Gastrocnemius medialis (tissue), 4 donors: ENCODE measurements at regions of chr16 and their contacts with region 1.

Region 1: GRCh38 chr16:10964039-10964890 is 19.9 kb downstream of the CLEC16A start:
- DNase-seq: peak; percentile 70 to 76
- ATAC-seq: peak; percentile 63 to 90
- H3K4me3 ChIP-seq: no peak overlapping the region
- H3K27ac ChIP-seq: peak overlapping the region; percentile 57 to 75 (median 69)
- H3K4me1 ChIP-seq: peaks cover 15 to 24% of the 10 kb centered on the region in 2 donors
- H3K27me3 ChIP-seq: no peaks in the 10 kb centered on the region
- CTCF ChIP-seq: peak; percentile 90 to 97 (median 94)
- POLR2A ChIP-seq: no peak

Region 2: GRCh38 chr16:11145173-11145818 is 181.0 kb after region 1 on chr16:
- in situ Hi-C with region 1: no loop called
- intact Hi-C with region 1: loop called (anchors 5 kb)
- DNase-seq: peak; percentile 73 to 91
- ATAC-seq: peak; percentile 85 to 94
- H3K4me3 ChIP-seq: no peak overlapping the region
- H3K27ac ChIP-seq: peak overlapping the region; percentile 54 to 73 (median 68)
- H3K4me1 ChIP-seq: peaks cover 31 to 40% of the 10 kb centered on the region in 2 donors
- H3K27me3 ChIP-seq: no peaks in the 10 kb centered on the region
- CTCF ChIP-seq: peak in 1 of 5 experiments; percentile 34
- POLR2A ChIP-seq: peak; percentile 50 to 58

Region 3: GRCh38 chr16:11263737-11264136 is 299.5 kb after region 1 on chr16:
- in situ Hi-C with region 1: loop called in 3 of 4 experiments (anchors 5 kb)
- intact Hi-C with region 1: no loop called
- DNase-seq: no peak
- ATAC-seq: no peak
- H3K4me3 ChIP-seq: no peak overlapping the region
- H3K27ac ChIP-seq: no peak overlapping the region
- H3K4me1 ChIP-seq: peaks cover 0 to 5% of the 10 kb centered on the region in 2 donors
- H3K27me3 ChIP-seq: no peaks in the 10 kb centered on the region
- CTCF ChIP-seq: no peak
- POLR2A ChIP-seq: no peak

Region 4: GRCh38 chr16:11356573-11357331 is 392.5 kb after region 1 on chr16:
- in situ Hi-C with region 1: loop called (anchors 10 to 25 kb)
- intact Hi-C with region 1: loop called (anchors 2 kb)
- DNase-seq: peak; percentile 20 to 44
- ATAC-seq: peak in 1 of 2 donors; percentile 14
- H3K4me3 ChIP-seq: no peak overlapping the region
- H3K27ac ChIP-seq: no peak overlapping the region
- H3K4me1 ChIP-seq: peaks cover 7 to 10% of the 10 kb centered on the region in 2 donors
- H3K27me3 ChIP-seq: no peaks in the 10 kb centered on the region
- CTCF ChIP-seq: peak; percentile 23 to 55 (median 41)
- POLR2A ChIP-seq: no peak

Region 5: DNA sequence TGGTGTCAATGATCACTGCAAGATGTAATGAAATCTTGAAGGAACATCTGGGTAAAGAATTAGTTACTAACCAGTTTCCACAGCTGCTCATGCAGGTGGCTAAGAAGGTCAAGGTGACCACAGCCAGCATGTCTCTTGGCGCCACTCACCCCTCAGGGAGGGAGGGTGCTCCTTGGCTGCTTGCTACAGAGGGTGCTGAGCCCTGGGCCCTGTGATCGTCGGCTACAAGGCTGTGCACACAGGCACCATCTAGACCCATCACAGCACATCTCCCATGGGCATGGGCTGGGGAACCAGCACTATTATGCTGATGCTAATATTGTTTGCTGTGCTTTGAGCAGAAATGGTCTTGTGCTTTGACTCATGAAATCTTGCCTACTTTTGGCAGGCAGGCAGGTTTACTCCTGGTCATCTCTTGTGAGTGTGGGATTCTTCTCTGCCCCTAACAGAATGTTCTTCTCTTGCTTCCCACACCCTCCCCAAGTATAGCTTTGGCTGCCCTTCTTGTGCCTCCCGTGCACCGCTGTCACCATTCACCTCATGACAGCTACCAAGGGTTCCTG is 742.0 kb after region 1 on chr16:
- in situ Hi-C with region 1: loop called in 1 of 4 experiments (anchors 25 kb)
- intact Hi-C with region 1: no loop called
- DNase-seq: peak; percentile 90 to 94
- ATAC-seq: peak; percentile 90 to 92
- H3K4me3 ChIP-seq: peak overlapping the region in 1 of 4 donors; percentile 1
- H3K27ac ChIP-seq: peak overlapping the region; percentile 89 to 95 (median 94)
- H3K4me1 ChIP-seq: peaks cover 61 to 64% of the 10 kb centered on the region in 2 donors
- H3K27me3 ChIP-seq: no peaks in the 10 kb centered on the region
- CTCF ChIP-seq: no peak
- POLR2A ChIP-seq: peak; percentile 52 to 75

Region 6: DNA sequence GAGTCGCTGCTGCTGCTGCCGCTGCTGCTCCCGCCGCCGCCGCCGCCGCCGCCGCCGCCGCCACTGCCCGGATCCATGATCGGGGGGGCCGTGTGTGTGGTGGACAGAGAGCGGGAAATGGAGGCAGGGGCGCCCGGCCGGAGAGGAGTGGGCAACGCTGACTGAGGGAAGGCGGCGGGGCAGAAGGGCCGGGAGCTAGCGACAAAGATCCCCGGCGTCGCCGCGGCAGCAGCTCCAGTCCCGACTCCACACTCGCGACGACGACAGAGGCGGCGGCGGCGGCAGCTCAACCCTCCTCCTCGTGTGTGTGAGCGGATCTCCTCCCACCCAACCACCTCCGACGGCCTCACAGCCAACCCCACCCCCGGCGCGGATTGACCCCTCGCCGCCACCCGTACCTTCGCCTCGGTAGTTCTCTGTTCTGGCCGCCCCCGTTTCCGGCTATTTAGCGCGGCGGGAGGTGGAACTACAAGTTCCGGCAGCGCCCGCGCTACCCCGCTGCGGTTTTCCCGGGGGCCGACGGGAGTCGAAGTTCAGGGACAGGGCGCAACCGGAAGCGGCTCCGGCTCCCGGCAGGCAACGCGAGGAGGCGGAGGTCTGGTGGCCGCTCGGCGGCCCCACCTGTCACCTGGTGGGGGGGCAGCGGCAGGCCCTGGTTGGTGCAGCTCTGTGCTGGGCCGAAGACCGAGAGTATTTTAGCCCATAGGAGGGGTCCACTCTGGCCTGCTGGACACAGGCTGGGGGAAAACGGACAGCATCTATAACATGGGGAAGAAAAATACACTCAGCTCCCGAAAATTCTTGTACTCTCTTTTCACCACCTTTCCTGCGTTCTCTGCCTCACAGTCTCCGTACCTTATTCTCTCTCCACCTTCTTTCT is 951.6 kb after region 1 on chr16 and contains the start of gene GSPT1:
- in situ Hi-C with region 1: no loop called
- intact Hi-C with region 1: loop called (anchors 5 kb)
- DNase-seq: peak; percentile 99
- ATAC-seq: peak; percentile 94 to 97
- H3K4me3 ChIP-seq: peak within 1 kb of the TSS; percentile 81 to 89 (median 84)
- H3K27ac ChIP-seq: peak within 1 kb of the TSS; percentile 92 to 99 (median 96)
- H3K4me1 ChIP-seq: peaks cover 29 to 34% of the 10 kb centered on the region in 2 donors
- H3K27me3 ChIP-seq: no peaks in the 10 kb centered on the region
- CTCF ChIP-seq: peak in 4 of 5 experiments; percentile 17 to 58 (median 24)
- POLR2A ChIP-seq: peak; percentile 93 to 96
- total RNA-seq, gene GSPT1: 86.9 to 169 (median 139) TPM